ENCODE measurements at regions of chr5 and their contacts with region 1.

Region 1: GRCh38 chr5:149834246-149834855 is 104.2 kb downstream of the PPARGC1B start:
- DNase-seq: peak; percentile 94
- ATAC-seq: peak; percentile 61
- H3K4me3 ChIP-seq: no peak overlapping the region
- H3K27ac ChIP-seq: no peak overlapping the region
- H3K4me1 ChIP-seq: peaks cover 9% of the 10 kb centered on the region
- H3K27me3 ChIP-seq: no peaks in the 10 kb centered on the region
- CTCF ChIP-seq: peak; percentile 97

Region 2: DNA sequence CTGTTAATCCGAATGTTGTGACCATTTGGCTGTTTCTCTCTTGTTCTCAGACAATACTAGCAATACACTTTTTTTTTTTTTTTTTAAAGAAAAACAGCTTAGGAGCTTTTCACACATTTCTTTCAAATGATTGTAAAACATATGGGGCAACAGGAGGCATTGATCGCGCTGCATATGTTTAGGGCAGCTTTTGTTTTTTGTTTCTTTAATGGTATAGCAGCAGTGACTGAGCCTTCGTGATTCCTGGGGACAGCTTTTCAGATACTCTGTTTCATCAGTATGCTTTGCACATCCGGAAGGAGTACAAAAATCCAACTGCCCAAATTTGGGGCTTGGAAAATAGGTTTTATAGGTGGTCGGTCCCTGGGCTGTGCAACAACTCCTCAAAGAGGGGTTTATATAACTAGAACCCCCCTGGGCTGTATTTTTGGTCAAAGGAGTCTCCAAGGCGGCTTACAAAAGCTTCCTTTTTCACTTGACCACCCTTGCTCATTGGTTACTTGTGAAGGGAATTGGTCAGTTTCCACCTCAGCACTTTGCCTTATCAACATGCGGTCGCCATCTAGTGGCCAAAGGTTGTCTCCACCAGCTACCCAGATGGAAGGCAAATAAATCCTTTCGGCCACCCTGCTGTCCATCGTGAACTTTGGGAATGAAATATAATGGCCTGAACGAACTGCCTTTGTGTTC is 18.4 kb after region 1 on chr5:
- CTCF ChIA-PET with region 1: interaction called, 17 read pairs
- POLR2A ChIA-PET with region 1: no interaction called
- intact Hi-C with region 1: loop called (anchors 1 kb)
- DNase-seq: peak; percentile 87
- ATAC-seq: peak; percentile 93
- H3K4me3 ChIP-seq: no peak overlapping the region
- H3K27ac ChIP-seq: no peak overlapping the region
- H3K4me1 ChIP-seq: peaks cover 7% of the 10 kb centered on the region; the same call in 1 of the 2 replicates
- H3K27me3 ChIP-seq: no peaks in the 10 kb centered on the region
- CTCF ChIP-seq: peak; percentile 99

Region 3: GRCh38 chr5:149887622-149888183 is 53.4 kb after region 1 on chr5:
- CTCF ChIA-PET with region 1: no interaction called
- POLR2A ChIA-PET with region 1: no interaction called
- intact Hi-C with region 1: no loop called
- DNase-seq: peak; percentile 39
- ATAC-seq: no peak
- H3K4me3 ChIP-seq: no peak overlapping the region
- H3K27ac ChIP-seq: no peak overlapping the region
- H3K4me1 ChIP-seq: no peaks in the 10 kb centered on the region
- H3K27me3 ChIP-seq: no peaks in the 10 kb centered on the region
- CTCF ChIP-seq: no peak

Region 4: GRCh38 chr5:149960272-149961185 is 126.2 kb after region 1 on chr5 and contains the start of gene SLC26A2:
- CTCF ChIA-PET with region 1: interaction called, 36 read pairs
- POLR2A ChIA-PET with region 1: interaction called, 3 read pairs
- intact Hi-C with region 1: loop called (anchors 1 kb)
- DNase-seq: peak; percentile 99
- ATAC-seq: peak; percentile 95
- H3K4me3 ChIP-seq: peak within 1 kb of the TSS; percentile 78
- H3K27ac ChIP-seq: peak within 1 kb of the TSS; percentile 56
- H3K4me1 ChIP-seq: peaks cover 31% of the 10 kb centered on the region
- H3K27me3 ChIP-seq: no peaks in the 10 kb centered on the region
- CTCF ChIP-seq: no peak
- total RNA-seq, gene SLC26A2: 10.8 and 13.1 TPM in 2 replicates

Region 5: GRCh38 chr5:150189728-150190502 is 355.6 kb after region 1 on chr5 and contains the start of gene SLC6A7:
- CTCF ChIA-PET with region 1: no interaction called
- POLR2A ChIA-PET with region 1: no interaction called
- intact Hi-C with region 1: no loop called
- DNase-seq: no peak
- ATAC-seq: no peak
- H3K4me3 ChIP-seq: no peak within 1 kb of the TSS
- H3K27ac ChIP-seq: no peak within 1 kb of the TSS
- H3K4me1 ChIP-seq: no peaks in the 10 kb centered on the region
- H3K27me3 ChIP-seq: peaks cover 35% of the 10 kb centered on the region
- CTCF ChIP-seq: no peak
- total RNA-seq, gene SLC6A7: 0.29 and 0.35 TPM in 2 replicates

Region 6: DNA sequence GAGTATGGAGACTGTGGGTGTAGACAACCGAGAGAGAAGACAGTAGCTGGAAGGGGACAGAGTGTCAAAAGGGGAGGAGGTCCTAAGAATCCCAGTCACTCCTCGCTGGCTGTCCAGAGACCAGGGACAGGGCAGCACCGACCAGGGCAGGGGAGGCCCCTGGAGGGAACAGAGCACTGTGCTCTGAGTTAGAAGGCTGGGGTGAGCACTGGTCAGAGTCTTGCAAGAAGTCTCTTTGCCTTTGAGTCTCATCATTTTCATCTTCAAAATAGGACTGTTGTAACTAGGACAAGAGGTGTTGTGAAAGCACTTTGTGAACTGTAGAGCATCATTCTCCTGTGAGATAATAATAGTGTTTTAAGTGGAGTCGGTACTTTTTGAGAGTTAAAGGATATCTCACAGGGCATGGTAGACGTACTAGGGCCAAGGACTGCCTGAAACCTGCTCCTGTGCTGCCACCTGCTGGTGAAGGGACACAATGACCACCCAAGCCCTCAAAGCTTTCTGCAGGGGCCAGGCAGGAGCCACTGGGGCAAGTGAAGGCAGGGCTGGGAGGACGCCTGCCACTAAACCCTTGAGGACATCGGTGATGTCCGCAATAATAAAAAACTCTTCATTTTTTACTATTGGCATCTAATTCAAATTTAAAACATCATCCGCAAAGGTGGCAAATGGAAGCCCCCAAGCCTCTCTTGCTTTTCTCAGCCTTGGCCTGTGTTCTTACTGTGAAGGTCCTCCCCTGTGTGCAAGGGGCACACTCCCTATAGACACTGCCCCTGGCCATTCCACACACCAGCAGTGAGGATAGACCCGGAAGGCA is 383.7 kb after region 1 on chr5:
- CTCF ChIA-PET with region 1: no interaction called
- POLR2A ChIA-PET with region 1: no interaction called
- intact Hi-C with region 1: loop called (anchors 1 kb)
- DNase-seq: peak; percentile 93
- ATAC-seq: peak; percentile 94
- H3K4me3 ChIP-seq: no peak overlapping the region
- H3K27ac ChIP-seq: no peak overlapping the region
- H3K4me1 ChIP-seq: peaks cover 8% of the 10 kb centered on the region; the same call in 1 of the 2 replicates
- H3K27me3 ChIP-seq: no peaks in the 10 kb centered on the region
- CTCF ChIP-seq: peak; percentile 97